Uterus (tissue), 4 donors: ENCODE measurements at regions of chr5 and their contacts with region 1.

Region 1: GRCh38 chr5:140151730-140152597 is 23.0 kb upstream of the CYSTM1 start:
- DNase-seq: no peak
- H3K4me3 ChIP-seq: no peak overlapping the region
- H3K27ac ChIP-seq: no peak overlapping the region
- H3K4me1 ChIP-seq: no peaks in the 10 kb centered on the region
- H3K27me3 ChIP-seq: no peaks in the 10 kb centered on the region
- CTCF ChIP-seq: no peak
- POLR2A ChIP-seq: no peak

Region 2: GRCh38 chr5:140073296-140073695 is 78.7 kb before region 1 on chr5:
- intact Hi-C with region 1: loop called (anchors 5 kb)
- DNase-seq: no peak
- H3K4me3 ChIP-seq: no peak overlapping the region
- H3K27ac ChIP-seq: no peak overlapping the region
- H3K4me1 ChIP-seq: no peaks in the 10 kb centered on the region
- H3K27me3 ChIP-seq: no peaks in the 10 kb centered on the region
- CTCF ChIP-seq: peak; percentile 53 to 68 (median 66)
- POLR2A ChIP-seq: no peak